ENCODE measurements at regions of chr13 and their contacts with region 1.

Region 1: GRCh38 chr13:97986835-97987234 is 33.4 kb downstream of the IPO5 start:
- DNase-seq: no peak
- ATAC-seq: no peak
- H3K4me3 ChIP-seq: no peak overlapping the region
- H3K27ac ChIP-seq: no peak overlapping the region
- H3K4me1 ChIP-seq: no peaks in the 10 kb centered on the region
- H3K27me3 ChIP-seq: no peaks in the 10 kb centered on the region
- CTCF ChIP-seq: no peak

Region 2: DNA sequence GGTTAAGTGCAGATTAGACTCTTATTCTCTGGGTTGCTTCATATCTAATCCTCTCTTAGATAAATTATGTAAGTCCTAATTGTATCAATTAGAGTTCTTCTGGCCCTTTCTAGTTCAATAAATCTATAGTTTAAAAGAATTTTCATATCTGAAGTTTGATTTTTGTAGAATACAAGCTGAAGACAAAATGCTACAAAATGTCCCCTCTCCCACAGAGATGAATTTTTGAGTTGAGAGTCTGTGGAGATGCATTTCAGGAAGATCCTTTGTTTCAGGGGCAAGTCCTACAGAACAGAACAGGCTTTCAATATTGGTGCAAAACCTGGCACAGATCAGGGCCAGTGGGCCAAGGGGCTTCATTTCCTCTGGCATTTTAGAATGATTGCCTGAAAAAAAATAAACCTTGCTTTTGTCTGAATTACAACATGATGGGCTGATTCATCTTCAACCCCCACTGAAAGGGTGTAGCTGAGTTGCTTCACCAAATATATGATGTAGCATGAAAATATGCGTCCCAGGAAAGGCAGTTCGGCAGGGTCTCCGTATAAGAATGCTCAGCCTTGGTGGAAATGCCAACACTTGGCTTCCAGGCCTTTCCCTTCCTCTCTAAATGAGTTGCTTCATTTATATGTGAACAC is 39.8 kb before region 1 on chr13:
- CTCF ChIA-PET with region 1: no interaction called
- POLR2A ChIA-PET with region 1: interaction called, 10 read pairs
- in situ Hi-C with region 1: no loop called
- intact Hi-C with region 1: no loop called
- DNase-seq: no peak
- ATAC-seq: no peak
- H3K4me3 ChIP-seq: no peak overlapping the region
- H3K27ac ChIP-seq: no peak overlapping the region
- H3K4me1 ChIP-seq: no peaks in the 10 kb centered on the region
- H3K27me3 ChIP-seq: no peaks in the 10 kb centered on the region
- CTCF ChIP-seq: no peak

Measured in Panc1 (cell line).